Endothelial cell of umbilical vein (primary cell): ENCODE measurements at regions of chr2 and their contacts with region 1.

Region 1: DNA sequence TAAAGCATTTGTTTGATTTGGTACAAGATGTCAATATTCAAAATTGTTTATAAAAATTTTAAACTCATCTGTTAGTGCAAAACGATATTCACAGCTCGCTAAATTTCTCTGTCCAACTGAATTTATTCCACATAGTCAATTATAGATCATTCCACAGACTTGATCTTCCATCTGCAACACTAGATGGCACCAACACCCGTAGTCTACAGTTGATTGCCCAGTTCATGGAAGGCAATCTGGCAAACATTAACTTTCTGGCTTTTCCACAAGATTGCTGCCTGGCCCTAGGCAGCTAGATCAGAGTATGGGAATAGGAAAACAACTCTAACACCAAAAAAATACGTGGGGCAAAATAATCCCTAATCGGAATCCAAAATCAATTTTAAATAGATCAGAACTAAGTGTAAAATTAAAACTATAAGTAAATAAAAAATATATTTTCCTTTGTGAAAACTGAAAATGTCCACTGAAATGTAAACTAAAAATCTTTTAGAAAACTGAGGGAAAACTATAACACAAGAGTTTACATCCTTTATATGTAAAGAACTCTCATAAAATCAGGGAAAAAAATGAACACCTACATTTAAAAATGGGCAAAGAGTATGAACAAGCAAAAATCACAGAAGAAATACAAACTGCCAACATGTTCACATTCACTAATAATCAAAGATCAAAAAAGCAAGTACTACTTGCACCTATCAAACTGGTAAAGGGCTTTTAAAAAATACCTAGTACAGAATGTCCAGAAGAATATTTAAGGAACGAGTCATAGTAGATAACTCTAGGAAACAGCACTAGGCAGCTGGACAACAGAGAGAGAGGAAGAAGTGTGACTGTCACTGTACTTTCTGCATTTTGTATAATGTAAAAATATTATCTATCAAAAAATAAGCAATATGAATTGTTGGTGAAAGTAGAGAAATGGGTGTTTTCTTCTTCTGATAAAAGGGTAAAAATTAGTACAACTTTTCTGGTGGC is 35.0 kb downstream of the RTN4 start:
- DNase-seq: peak; percentile 72
- H3K4me3 ChIP-seq: no peak overlapping the region
- H3K27ac ChIP-seq: no peak overlapping the region
- H3K4me1 ChIP-seq: peaks cover 63% of the 10 kb centered on the region
- H3K27me3 ChIP-seq: no peaks in the 10 kb centered on the region
- CTCF ChIP-seq: peak; percentile 49
- POLR2A ChIP-seq: no peak

Region 2: DNA sequence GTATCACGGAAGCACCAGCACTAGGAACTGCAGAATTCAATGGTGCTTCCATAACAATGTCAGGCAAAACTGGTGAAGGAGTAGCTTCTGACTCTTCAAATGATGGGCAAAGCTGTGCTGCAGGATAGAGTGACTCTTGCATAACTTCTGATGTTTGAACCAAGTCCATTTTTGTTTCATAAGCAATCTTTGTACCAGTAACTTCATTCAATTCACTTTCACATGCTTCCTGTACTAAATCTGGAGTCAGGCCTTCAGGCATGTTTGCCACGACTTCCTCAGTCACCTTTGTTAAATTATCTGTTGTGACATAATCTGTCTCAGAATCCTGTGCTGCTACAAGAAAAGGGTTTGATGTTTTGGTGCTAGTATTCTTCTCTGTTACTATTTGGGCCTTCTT is 11.0 kb after region 1 on chr2:
- CTCF ChIA-PET with region 1: interaction called, 4 read pairs
- POLR2A ChIA-PET with region 1: no interaction called
- dilution Hi-C with region 1: no loop called
- intact Hi-C with region 1: loop called (anchors 1 kb)
- DNase-seq: peak; percentile 22
- H3K4me3 ChIP-seq: no peak overlapping the region
- H3K27ac ChIP-seq: no peak overlapping the region
- H3K4me1 ChIP-seq: peaks cover 17% of the 10 kb centered on the region
- H3K27me3 ChIP-seq: no peaks in the 10 kb centered on the region
- CTCF ChIP-seq: no peak
- POLR2A ChIP-seq: no peak